Activated B cell treated with CpG ODN at 0.5 μM for 24 hours (primary cell): ENCODE measurements at regions of chr1 and their contacts with region 1.

Region 1: DNA sequence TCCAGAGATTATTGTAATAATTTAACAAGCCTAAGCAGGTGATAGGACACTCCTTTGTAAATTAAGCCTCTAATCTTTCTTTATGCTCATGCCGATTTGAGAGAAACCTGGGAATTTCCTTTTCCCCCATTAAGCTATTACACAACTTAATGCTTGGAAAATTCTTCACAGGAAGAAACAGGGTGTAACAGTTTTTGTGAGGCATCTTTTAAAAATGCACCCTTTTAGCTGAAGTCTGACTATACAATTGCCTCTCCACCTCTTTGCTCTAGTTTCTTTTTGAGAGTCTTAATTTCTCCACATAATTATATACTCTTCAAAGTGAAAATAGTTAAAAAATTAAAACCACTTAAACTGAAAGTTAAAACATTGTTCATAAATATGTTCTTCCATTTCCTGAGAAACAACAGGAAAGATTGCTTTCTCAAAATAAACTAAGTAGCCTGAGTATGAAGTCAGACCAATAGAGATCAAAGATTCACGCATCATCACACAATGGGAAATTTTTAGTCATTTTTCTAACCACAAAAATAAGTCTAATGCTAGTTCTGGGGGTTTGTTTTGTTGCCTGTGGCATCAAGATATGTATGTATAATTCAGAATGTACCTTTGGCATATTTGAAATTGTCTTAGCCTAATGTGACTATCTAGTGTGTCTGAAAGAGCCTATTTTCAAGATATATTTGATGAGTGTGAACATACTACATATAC is 34.7 kb downstream of the LRRC8D start:
- DNase-seq: no peak
- ATAC-seq: peak; percentile 89
- H3K4me3 Mint-ChIP-seq: peak overlapping the region; percentile 61
- H3K27ac Mint-ChIP-seq: no peak overlapping the region
- H3K4me1 Mint-ChIP-seq: peaks cover 2% of the 10 kb centered on the region
- H3K27me3 Mint-ChIP-seq: no peaks in the 10 kb centered on the region
- CTCF ChIP-seq: no peak

Region 2: GRCh38 chr1:89873770-89874169 is 18.2 kb after region 1 on chr1:
- CTCF ChIA-PET with region 1: no interaction called
- POLR2A ChIA-PET with region 1: no interaction called
- intact Hi-C with region 1: loop called (anchors 2 kb)
- DNase-seq: no peak
- ATAC-seq: no peak
- H3K4me3 Mint-ChIP-seq: no peak overlapping the region
- H3K27ac Mint-ChIP-seq: peak overlapping the region; percentile 7
- H3K4me1 Mint-ChIP-seq: peaks cover 13% of the 10 kb centered on the region
- H3K27me3 Mint-ChIP-seq: no peaks in the 10 kb centered on the region
- CTCF ChIP-seq: no peak

Region 3: GRCh38 chr1:89908672-89909436 is 53.3 kb after region 1 on chr1:
- CTCF ChIA-PET with region 1: no interaction called
- POLR2A ChIA-PET with region 1: no interaction called
- intact Hi-C with region 1: loop called (anchors 5 kb)
- DNase-seq: no peak
- ATAC-seq: no peak
- H3K4me3 Mint-ChIP-seq: no peak overlapping the region
- H3K27ac Mint-ChIP-seq: peak overlapping the region; percentile 33
- H3K4me1 Mint-ChIP-seq: peaks cover 51% of the 10 kb centered on the region
- H3K27me3 Mint-ChIP-seq: no peaks in the 10 kb centered on the region
- CTCF ChIP-seq: no peak